Posterior vena cava (tissue), 2 donors: ENCODE measurements at regions of chr11 and their contacts with region 1.

Region 1: DNA sequence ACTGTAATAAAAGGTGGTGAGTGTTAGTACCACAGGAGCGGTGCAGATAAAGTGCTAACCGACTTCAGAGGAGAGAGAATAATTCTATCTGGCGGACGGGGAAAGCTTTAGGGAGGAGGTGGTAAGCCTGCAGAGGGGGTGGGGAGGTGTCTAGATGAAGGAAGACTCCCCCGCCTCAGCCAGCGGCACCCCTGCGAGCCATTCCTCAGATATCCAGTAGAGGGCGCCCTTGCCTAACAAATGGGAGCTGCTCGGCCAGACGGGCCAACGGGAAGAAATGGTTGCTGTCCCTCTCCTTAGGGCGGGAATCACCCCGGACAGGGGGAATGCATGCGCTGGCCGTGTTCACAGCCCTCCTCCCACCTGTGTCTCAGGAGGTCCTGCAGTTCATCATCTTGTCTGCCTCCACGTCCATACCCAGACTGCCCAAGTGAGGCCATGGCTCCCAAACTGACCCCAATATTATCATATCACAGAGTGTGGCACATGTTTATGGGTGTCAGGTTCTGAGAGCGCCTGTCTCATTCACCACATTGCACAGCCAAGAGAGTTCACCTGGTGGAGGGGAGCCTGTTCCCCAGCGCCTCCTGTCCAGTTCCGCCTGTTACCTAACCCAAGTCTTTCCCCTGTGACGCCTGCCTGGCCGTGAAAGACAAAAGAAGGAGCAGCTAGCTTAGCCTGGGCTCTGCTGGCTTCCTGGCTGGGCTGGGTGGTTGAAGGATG is 85.5 kb downstream of the ST3GAL4 start:
- DNase-seq: peak; percentile 92

Region 2: DNA sequence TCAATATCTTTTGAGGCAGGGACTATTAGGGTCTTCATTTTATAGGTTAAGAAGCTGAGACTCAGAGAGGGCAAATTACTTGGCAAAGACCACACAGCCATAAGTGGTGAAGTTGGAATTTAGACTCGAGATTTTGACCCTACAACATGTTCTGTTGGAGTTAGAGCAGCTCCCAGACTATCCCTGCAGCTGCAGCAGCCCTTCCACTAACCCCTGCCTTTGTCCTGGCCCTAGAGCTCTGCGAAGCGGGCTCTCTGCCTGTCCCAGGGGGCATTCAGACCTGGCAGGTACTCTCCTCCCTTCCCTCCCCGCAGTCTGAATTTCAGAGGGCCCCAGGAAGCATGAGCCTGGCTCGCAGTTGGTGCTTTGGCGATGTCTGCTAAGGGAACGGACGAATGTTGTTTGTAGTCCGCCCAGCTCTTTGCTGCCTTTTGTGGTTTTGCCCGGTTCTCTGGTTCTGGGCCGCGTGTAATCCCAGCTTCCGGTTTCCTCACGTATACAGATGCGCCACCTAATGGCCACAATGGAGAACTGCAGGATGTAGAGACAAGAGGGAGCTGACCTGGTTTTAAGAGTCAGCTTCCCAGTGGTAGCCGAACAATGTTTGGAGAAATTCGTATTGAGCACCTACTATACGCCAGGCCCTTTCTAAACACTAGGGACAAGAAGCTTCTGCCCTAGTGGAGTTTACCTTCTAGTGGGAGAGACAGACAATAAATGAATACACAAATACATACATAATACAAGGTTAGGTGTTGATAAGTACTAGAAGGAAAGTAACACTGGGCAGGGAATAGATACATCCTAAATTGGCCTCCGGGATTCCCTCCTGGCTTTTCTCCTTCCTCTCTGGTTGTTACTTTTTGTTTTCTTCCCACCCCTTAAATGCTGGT is 39.7 kb after region 1 on chr11:
- intact Hi-C with region 1: loop called in 1 of 2 experiments (anchors 5 kb)
- DNase-seq: peak; percentile 93

Region 3: GRCh38 chr11:126989942-126990715 is 549.2 kb after region 1 on chr11:
- intact Hi-C with region 1: loop called in 1 of 2 experiments (anchors 10 kb)
- DNase-seq: peak; percentile 88

Region 4: GRCh38 chr11:127345819-127346459 is 905.0 kb after region 1 on chr11:
- intact Hi-C with region 1: loop called in 1 of 2 experiments (anchors 10 kb)
- DNase-seq: no peak

Region 5: GRCh38 chr11:128164080-128164741 is 1723.3 kb after region 1 on chr11:
- intact Hi-C with region 1: loop called in 1 of 2 experiments (anchors 10 kb)
- DNase-seq: no peak